ENCODE measurements at regions of chr12 and their contacts with region 1.

Region 1: GRCh38 chr12:79344855-79345847 is 345.6 kb downstream of the PAWR start:
- DNase-seq: peak; percentile 74
- H3K4me3 Mint-ChIP-seq: no peak overlapping the region
- H3K27ac Mint-ChIP-seq: no peak overlapping the region
- H3K4me1 Mint-ChIP-seq: no peaks in the 10 kb centered on the region
- H3K27me3 Mint-ChIP-seq: peaks cover 16% of the 10 kb centered on the region
- CTCF ChIP-seq: peak; percentile 70

Region 2: GRCh38 chr12:78146365-78146772 is 1198.8 kb before region 1 on chr12:
- CTCF ChIA-PET with region 1: no interaction called
- intact Hi-C with region 1: loop called (anchors 10 kb)
- DNase-seq: no peak
- H3K4me3 Mint-ChIP-seq: no peak overlapping the region
- H3K27ac Mint-ChIP-seq: no peak overlapping the region
- H3K4me1 Mint-ChIP-seq: no peaks in the 10 kb centered on the region
- H3K27me3 Mint-ChIP-seq: no peaks in the 10 kb centered on the region
- CTCF ChIP-seq: peak; percentile 56

Region 3: GRCh38 chr12:78470354-78471195 is 874.6 kb before region 1 on chr12:
- CTCF ChIA-PET with region 1: interaction called, 6 read pairs
- intact Hi-C with region 1: loop called (anchors 1 kb)
- DNase-seq: peak; percentile 58
- H3K4me3 Mint-ChIP-seq: no peak overlapping the region
- H3K27ac Mint-ChIP-seq: no peak overlapping the region
- H3K4me1 Mint-ChIP-seq: no peaks in the 10 kb centered on the region
- H3K27me3 Mint-ChIP-seq: no peaks in the 10 kb centered on the region
- CTCF ChIP-seq: peak; percentile 39

Region 4: DNA sequence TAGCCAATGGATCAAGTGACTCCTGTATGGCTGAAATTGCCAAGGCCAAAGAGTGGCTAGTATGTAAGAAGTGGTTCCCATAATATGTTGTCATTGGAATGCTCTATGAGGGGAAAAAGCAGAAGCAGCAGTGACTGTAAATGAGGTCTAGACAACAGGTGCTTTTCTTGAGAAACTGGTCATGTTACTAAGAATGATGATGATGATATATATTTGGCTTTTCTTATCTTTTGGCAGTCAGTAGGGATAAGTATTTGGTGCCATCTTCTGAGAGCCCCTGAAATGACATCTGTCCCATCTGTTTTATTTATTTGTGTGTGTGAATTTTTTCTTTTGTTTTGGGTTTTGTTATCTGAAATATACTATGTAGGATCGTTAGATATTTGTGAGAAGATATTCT is 338.8 kb before region 1 on chr12:
- CTCF ChIA-PET with region 1: no interaction called
- intact Hi-C with region 1: loop called (anchors 10 kb)
- DNase-seq: no peak
- H3K4me3 Mint-ChIP-seq: no peak overlapping the region
- H3K27ac Mint-ChIP-seq: no peak overlapping the region
- H3K4me1 Mint-ChIP-seq: no peaks in the 10 kb centered on the region
- H3K27me3 Mint-ChIP-seq: no peaks in the 10 kb centered on the region
- CTCF ChIP-seq: no peak

Region 5: GRCh38 chr12:79206871-79207270 is 138.3 kb before region 1 on chr12:
- CTCF ChIA-PET with region 1: interaction called, 3 read pairs
- intact Hi-C with region 1: loop called (anchors 5 kb)
- DNase-seq: peak; percentile 27
- H3K4me3 Mint-ChIP-seq: no peak overlapping the region
- H3K27ac Mint-ChIP-seq: no peak overlapping the region
- H3K4me1 Mint-ChIP-seq: peaks cover 37% of the 10 kb centered on the region
- H3K27me3 Mint-ChIP-seq: no peaks in the 10 kb centered on the region
- CTCF ChIP-seq: no peak

Region 6: GRCh38 chr12:79291711-79292110 is 53.4 kb before region 1 on chr12:
- CTCF ChIA-PET with region 1: no interaction called
- intact Hi-C with region 1: no loop called
- DNase-seq: no peak
- H3K4me3 Mint-ChIP-seq: no peak overlapping the region
- H3K27ac Mint-ChIP-seq: no peak overlapping the region
- H3K4me1 Mint-ChIP-seq: no peaks in the 10 kb centered on the region
- H3K27me3 Mint-ChIP-seq: no peaks in the 10 kb centered on the region
- CTCF ChIP-seq: no peak

Region 7: GRCh38 chr12:79331870-79332269 is 13.3 kb before region 1 on chr12:
- CTCF ChIA-PET with region 1: no interaction called
- intact Hi-C with region 1: no loop called
- DNase-seq: no peak
- H3K4me3 Mint-ChIP-seq: no peak overlapping the region
- H3K27ac Mint-ChIP-seq: no peak overlapping the region
- H3K4me1 Mint-ChIP-seq: no peaks in the 10 kb centered on the region
- H3K27me3 Mint-ChIP-seq: no peaks in the 10 kb centered on the region
- CTCF ChIP-seq: no peak

Measured in Calu3 (cell line).